Activated CD4-positive, alpha-beta memory T cell treated with anti-CD3 and anti-CD28 coated beads for 36 hours (primary cell): ENCODE measurements at regions of chr10 and their contacts with region 1.

Region 1: GRCh38 chr10:3757638-3758490 is 27.1 kb downstream of the KLF6 start:
- DNase-seq: peak; percentile 84
- H3K4me3 Mint-ChIP-seq: peak overlapping the region; percentile 71
- H3K27ac Mint-ChIP-seq: peak overlapping the region; percentile 100
- H3K4me1 Mint-ChIP-seq: peaks cover 83% of the 10 kb centered on the region
- H3K27me3 Mint-ChIP-seq: no peaks in the 10 kb centered on the region

Region 2: DNA sequence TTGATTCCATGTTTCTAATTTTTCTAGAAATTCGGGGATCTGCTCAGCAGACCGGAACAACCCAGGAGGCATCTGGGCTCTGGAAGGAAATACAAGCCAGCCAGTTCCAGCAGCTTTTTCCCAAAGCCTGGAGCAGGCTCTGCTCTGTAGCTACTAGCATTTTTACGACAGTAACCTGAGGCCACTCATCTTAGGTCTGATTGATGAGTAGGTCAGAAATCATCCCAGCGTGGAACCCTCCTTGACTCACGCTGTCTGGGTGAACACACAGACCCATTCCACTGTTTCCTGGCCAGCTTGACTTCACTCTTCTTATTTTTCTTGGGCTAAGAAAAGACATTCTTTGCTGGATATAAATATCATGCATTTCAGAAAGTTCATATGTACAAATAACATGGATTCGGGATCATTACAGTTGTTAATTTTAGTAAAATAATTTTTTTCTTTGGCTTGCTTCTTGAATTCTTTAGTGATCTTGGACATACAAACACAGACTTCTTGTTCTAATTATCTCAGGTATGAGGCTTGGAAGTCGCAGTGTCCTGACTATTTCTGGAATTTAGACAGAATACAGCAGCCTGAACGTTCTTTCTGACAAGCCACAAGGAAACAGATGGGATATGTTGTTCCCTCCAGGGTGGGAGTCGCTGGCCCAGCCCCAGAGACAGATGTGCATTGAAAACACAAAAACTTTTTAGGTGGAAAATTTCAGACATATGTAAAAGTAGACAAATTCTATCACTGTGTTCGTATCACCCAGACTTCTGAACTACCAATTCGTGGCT is 530.7 kb before region 1 on chr10:
- CTCF ChIA-PET with region 1: no interaction called
- POLR2A ChIA-PET with region 1: no interaction called
- intact Hi-C with region 1: loop called (anchors 10 kb)
- DNase-seq: no peak
- H3K4me3 Mint-ChIP-seq: no peak overlapping the region
- H3K27ac Mint-ChIP-seq: no peak overlapping the region
- H3K4me1 Mint-ChIP-seq: peaks cover 23% of the 10 kb centered on the region
- H3K27me3 Mint-ChIP-seq: peaks cover 5% of the 10 kb centered on the region

Region 3: DNA sequence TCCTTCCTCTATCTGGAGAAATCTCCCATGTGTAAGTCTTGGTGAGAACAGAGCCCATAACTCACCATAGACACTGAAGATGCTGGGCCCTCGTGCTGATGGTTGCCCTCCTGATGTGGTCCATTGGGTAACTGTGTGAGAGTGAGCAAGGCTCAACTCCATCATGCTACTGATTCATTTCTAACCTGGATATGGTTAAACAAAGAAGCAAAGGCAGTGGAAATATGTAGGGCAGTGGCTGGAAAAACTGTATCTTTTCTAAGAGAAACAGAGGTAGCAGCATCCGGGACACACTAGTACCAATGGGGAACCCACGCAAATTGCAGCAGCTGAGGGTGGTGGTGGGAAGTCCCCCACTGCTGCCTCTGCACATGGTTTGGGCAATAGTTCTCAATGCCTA is 194.6 kb before region 1 on chr10:
- CTCF ChIA-PET with region 1: no interaction called
- POLR2A ChIA-PET with region 1: no interaction called
- intact Hi-C with region 1: loop called (anchors 5 kb)
- DNase-seq: peak; percentile 82
- H3K4me3 Mint-ChIP-seq: no peak overlapping the region
- H3K27ac Mint-ChIP-seq: peak overlapping the region; percentile 35
- H3K4me1 Mint-ChIP-seq: peaks cover 27% of the 10 kb centered on the region
- H3K27me3 Mint-ChIP-seq: no peaks in the 10 kb centered on the region

Region 4: GRCh38 chr10:3740157-3740871 is 17.6 kb before region 1 on chr10:
- CTCF ChIA-PET with region 1: interaction called, 8 read pairs
- POLR2A ChIA-PET with region 1: interaction called, 43 read pairs
- intact Hi-C with region 1: loop called (anchors 1 kb)
- DNase-seq: peak; percentile 57
- H3K4me3 Mint-ChIP-seq: peak overlapping the region; percentile 43
- H3K27ac Mint-ChIP-seq: peak overlapping the region; percentile 82
- H3K4me1 Mint-ChIP-seq: peaks cover 28% of the 10 kb centered on the region
- H3K27me3 Mint-ChIP-seq: no peaks in the 10 kb centered on the region

Region 5: DNA sequence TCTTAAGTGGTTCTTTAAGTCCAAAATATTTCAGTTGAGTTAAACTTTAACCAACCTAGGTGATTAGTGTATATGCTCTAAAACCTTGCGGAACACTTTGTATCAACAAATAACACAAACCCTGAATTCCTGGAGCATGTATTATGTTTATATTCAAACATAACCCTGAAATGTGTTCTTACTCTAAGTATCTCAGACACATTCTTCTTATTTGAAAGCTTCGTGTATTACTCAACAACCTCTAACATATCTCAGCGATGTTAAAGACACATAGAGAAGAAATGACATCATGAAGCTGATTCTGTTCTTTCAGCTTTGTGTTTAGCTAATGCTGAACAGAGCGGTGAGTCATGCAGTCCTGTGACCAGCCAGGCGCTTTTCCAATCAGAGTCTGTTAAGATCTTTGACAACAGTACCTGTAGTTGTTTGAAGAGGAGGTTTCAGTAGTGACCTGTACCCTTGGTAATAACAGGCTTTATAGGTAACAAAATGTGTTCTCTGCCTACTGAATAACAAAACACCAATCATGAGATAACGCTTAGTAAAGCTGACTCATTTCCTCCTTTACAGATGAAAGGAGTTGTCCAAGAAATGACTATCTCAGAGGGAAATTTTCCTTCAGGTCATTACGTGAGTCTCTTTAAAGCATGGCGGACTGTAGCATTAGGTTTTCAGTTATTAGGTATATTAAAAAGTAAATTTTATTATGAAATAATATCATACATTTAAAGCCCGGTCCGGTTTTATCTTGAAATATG is 94.5 kb after region 1 on chr10:
- CTCF ChIA-PET with region 1: no interaction called
- POLR2A ChIA-PET with region 1: interaction called, 9 read pairs
- intact Hi-C with region 1: loop called (anchors 1 kb)
- DNase-seq: peak; percentile 86
- H3K4me3 Mint-ChIP-seq: peak overlapping the region; percentile 36
- H3K27ac Mint-ChIP-seq: peak overlapping the region; percentile 92
- H3K4me1 Mint-ChIP-seq: peaks cover 53% of the 10 kb centered on the region
- H3K27me3 Mint-ChIP-seq: no peaks in the 10 kb centered on the region